ENCODE measurements at regions of chr14 and their contacts with region 1.

Region 1: GRCh38 chr14:71320107-71320733 is 413.0 kb downstream of the PCNX1 start:
- DNase-seq: peak; percentile 94 to 99 (median 98)
- ATAC-seq: peak; percentile 92
- H3K4me3 ChIP-seq: peak within 1 kb of the TSS; percentile 69
- H3K4me3 Mint-ChIP-seq: peak within 1 kb of the TSS; percentile 90 to 95 (median 94)
- H3K27ac ChIP-seq: peak within 1 kb of the TSS; percentile 94
- H3K27ac Mint-ChIP-seq: peak within 1 kb of the TSS; percentile 88 to 98 (median 95)
- H3K4me1 ChIP-seq: peaks cover 6 to 36% of the 10 kb centered on the region in 2 donors
- H3K4me1 Mint-ChIP-seq: peaks cover 28 to 48% (median 47%) of the 10 kb centered on the region in 7 donors
- H3K27me3 ChIP-seq: no peaks in the 10 kb centered on the region
- H3K27me3 Mint-ChIP-seq: peaks cover 0 to 3% (median 0%) of the 10 kb centered on the region in 5 donors

Region 2: GRCh38 chr14:70600382-70601157 is 719.6 kb before region 1 on chr14 and contains the start of gene MED6:
- CTCF ChIA-PET with region 1: no interaction called
- POLR2A ChIA-PET with region 1: no interaction called
- intact Hi-C with region 1: loop called (anchors 1 to 5 kb)
- DNase-seq: peak; percentile 78 to 94 (median 91)
- ATAC-seq: peak; percentile 100
- H3K4me3 ChIP-seq: peak within 1 kb of the TSS; percentile 96
- H3K4me3 Mint-ChIP-seq: peak within 1 kb of the TSS; percentile 97 to 100 (median 99)
- H3K27ac ChIP-seq: peak within 1 kb of the TSS; percentile 91
- H3K27ac Mint-ChIP-seq: peak within 1 kb of the TSS; percentile 96 to 99 (median 98)
- H3K4me1 ChIP-seq: peaks cover 11 to 14% of the 10 kb centered on the region in 2 donors
- H3K4me1 Mint-ChIP-seq: peaks cover 15 to 47% (median 40%) of the 10 kb centered on the region in 7 donors
- H3K27me3 ChIP-seq: no peaks in the 10 kb centered on the region
- H3K27me3 Mint-ChIP-seq: peaks cover 0 to 22% (median 6%) of the 10 kb centered on the region in 5 donors
- total RNA-seq, gene MED6: 53.4 to 97.0 (median 67.1) TPM

Region 3: DNA sequence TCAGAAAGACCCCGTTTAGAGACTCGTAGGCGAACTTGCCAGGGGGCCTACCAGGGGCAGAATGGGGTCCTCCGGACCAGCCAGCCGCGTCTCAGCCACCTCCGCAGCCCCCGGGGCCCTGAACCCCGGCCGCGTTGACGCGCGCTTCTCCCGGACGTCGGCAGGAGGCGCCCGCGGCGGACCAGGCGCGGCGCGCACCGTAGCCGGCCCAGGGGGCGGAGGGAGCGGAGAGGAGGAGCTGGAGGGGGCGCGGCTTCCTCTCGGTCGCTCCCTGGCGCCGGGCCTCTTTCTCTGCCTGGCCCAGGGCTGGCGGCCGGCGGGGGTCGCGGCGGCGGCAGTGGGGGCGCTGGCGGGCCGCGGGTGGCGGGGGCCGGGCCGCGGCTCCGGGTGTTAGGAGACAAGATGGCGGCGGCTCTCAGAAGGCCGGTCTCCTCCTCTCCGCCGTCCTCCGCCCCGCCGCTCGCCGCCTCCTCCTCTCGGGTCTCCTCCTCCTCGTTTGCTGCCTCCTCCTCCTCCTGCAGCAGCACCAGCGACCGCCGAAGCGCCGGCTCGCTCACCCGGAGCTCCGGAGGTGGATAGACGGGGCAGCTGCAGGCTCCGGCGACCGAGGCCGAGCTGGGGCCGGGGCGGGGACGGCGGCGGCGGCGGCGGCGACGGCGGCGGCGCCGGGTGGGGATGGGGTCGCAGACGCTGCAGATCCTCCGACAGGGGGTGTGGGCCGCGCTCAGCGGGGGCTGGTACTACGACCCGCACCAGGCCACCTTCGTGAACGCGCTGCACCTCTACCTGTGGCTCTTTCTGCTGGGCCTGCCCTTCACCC is 412.8 kb before region 1 on chr14 and contains the start of gene PCNX1:
- CTCF ChIA-PET with region 1: no interaction called
- POLR2A ChIA-PET with region 1: no interaction called
- intact Hi-C with region 1: loop called (anchors 5 to 10 kb)
- DNase-seq: peak; percentile 91 to 95 (median 94)
- ATAC-seq: peak; percentile 87
- H3K4me3 ChIP-seq: peak within 1 kb of the TSS; percentile 93
- H3K4me3 Mint-ChIP-seq: peak within 1 kb of the TSS; percentile 87 to 99 (median 94)
- H3K27ac ChIP-seq: peak within 1 kb of the TSS; percentile 87
- H3K27ac Mint-ChIP-seq: peak within 1 kb of the TSS; percentile 93 to 99 (median 97)
- H3K4me1 ChIP-seq: peaks cover 9 to 34% of the 10 kb centered on the region in 2 donors
- H3K4me1 Mint-ChIP-seq: peaks cover 49 to 75% (median 70%) of the 10 kb centered on the region in 7 donors
- H3K27me3 ChIP-seq: no peaks in the 10 kb centered on the region
- H3K27me3 Mint-ChIP-seq: no peaks in the 10 kb centered on the region
- total RNA-seq, gene PCNX1: 80.8 to 114 (median 112) TPM

Region 4: GRCh38 chr14:71388862-71389261 is 68.6 kb after region 1 on chr14:
- CTCF ChIA-PET with region 1: no interaction called
- POLR2A ChIA-PET with region 1: no interaction called
- intact Hi-C with region 1: no loop called
- DNase-seq: no peak
- ATAC-seq: no peak
- H3K4me3 ChIP-seq: no peak overlapping the region
- H3K4me3 Mint-ChIP-seq: peak overlapping the region in 1 of 10 donors; percentile 2
- H3K27ac ChIP-seq: no peak overlapping the region
- H3K27ac Mint-ChIP-seq: peak overlapping the region in 3 of 9 donors; percentile 0 to 32 (median 2)
- H3K4me1 ChIP-seq: no peaks in the 10 kb centered on the region
- H3K4me1 Mint-ChIP-seq: peaks cover 10 to 55% (median 30%) of the 10 kb centered on the region in 7 donors
- H3K27me3 ChIP-seq: no peaks in the 10 kb centered on the region
- H3K27me3 Mint-ChIP-seq: no peaks in the 10 kb centered on the region

Region 5: DNA sequence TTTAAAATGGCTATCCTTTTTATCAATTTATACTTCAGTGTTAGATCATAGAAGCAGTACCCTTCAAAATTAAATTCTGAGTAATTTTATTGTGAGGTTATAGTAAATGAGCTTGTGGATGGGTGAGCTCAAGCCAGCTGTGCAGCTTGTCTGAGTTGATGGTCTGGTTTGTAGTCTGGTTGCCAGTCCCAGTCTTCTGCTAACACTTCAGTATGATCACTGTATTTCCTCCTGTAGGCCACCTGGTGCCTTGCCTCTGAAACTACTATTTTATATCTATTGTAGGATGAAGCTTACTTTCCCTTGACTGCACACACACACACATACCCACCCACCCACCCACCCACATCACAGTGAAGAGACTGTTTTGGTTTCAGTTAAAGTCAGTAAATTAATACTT is 83.4 kb after region 1 on chr14:
- CTCF ChIA-PET with region 1: interaction called, 6 read pairs
- POLR2A ChIA-PET with region 1: interaction called, 17 read pairs
- intact Hi-C with region 1: loop called (anchors 1 kb)
- DNase-seq: peak in 7 of 9 donors; percentile 31 to 64 (median 44)
- ATAC-seq: peak; percentile 51
- H3K4me3 ChIP-seq: no peak overlapping the region
- H3K4me3 Mint-ChIP-seq: no peak overlapping the region
- H3K27ac ChIP-seq: no peak overlapping the region
- H3K27ac Mint-ChIP-seq: peak overlapping the region in 6 of 9 donors; percentile 33 to 74 (median 56)
- H3K4me1 ChIP-seq: peaks cover 0 to 15% of the 10 kb centered on the region in 2 donors
- H3K4me1 Mint-ChIP-seq: peaks cover 17 to 47% (median 34%) of the 10 kb centered on the region in 7 donors
- H3K27me3 ChIP-seq: no peaks in the 10 kb centered on the region
- H3K27me3 Mint-ChIP-seq: no peaks in the 10 kb centered on the region

Region 6: DNA sequence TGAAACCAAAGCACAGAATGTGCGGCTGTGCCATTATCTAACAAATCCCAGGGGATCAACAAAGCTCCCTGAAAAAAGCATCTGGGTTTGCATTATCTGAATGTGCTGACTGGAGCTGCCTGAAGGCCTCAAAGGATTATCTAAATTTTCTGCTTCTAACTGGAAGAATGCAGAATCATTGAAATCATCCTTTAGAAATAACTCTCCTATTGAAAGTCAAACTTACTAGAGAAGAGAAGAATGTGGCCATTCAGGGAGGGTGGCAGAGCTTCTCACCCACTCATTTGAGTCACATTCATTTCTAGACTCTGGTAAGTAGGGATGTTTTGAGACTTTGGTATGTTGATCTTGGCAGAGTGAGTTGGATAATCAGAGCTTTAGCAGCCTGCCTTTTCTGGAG is 391.4 kb after region 1 on chr14:
- CTCF ChIA-PET with region 1: interaction called, 4 read pairs
- POLR2A ChIA-PET with region 1: no interaction called
- intact Hi-C with region 1: loop called in 1 of 2 experiments (anchors 5 kb)
- DNase-seq: no peak
- ATAC-seq: no peak
- H3K4me3 ChIP-seq: no peak overlapping the region
- H3K4me3 Mint-ChIP-seq: no peak overlapping the region
- H3K27ac ChIP-seq: no peak overlapping the region
- H3K27ac Mint-ChIP-seq: peak overlapping the region in 1 of 9 donors; percentile 64
- H3K4me1 ChIP-seq: no peaks in the 10 kb centered on the region
- H3K4me1 Mint-ChIP-seq: peaks cover 0 to 22% (median 8%) of the 10 kb centered on the region in 7 donors
- H3K27me3 ChIP-seq: no peaks in the 10 kb centered on the region
- H3K27me3 Mint-ChIP-seq: no peaks in the 10 kb centered on the region

Region 7: GRCh38 chr14:72476657-72477499 is 1156.7 kb after region 1 on chr14:
- CTCF ChIA-PET with region 1: no interaction called
- POLR2A ChIA-PET with region 1: no interaction called
- intact Hi-C with region 1: loop called in 1 of 2 experiments (anchors 10 kb)
- DNase-seq: peak in 7 of 9 donors; percentile 20 to 75 (median 31)
- ATAC-seq: peak; percentile 85
- H3K4me3 ChIP-seq: peak overlapping the region; percentile 25
- H3K4me3 Mint-ChIP-seq: peak overlapping the region; percentile 34 to 83 (median 72)
- H3K27ac ChIP-seq: peak overlapping the region; percentile 4
- H3K27ac Mint-ChIP-seq: peak overlapping the region; percentile 15 to 93 (median 60)
- H3K4me1 ChIP-seq: peaks cover 10 to 21% of the 10 kb centered on the region in 2 donors
- H3K4me1 Mint-ChIP-seq: peaks cover 24 to 82% (median 45%) of the 10 kb centered on the region in 7 donors
- H3K27me3 ChIP-seq: no peaks in the 10 kb centered on the region
- H3K27me3 Mint-ChIP-seq: peaks cover 0 to 3% (median 0%) of the 10 kb centered on the region in 5 donors